ENCODE measurements at regions of chr6 and their contacts with region 1.

Region 1: GRCh38 chr6:26204332-26205165 is 117.3 kb downstream of the HFE start:
- DNase-seq: peak; percentile 98
- ATAC-seq: peak; percentile 72
- H3K4me3 ChIP-seq: peak overlapping the region; percentile 63 to 71
- H3K27ac ChIP-seq: peak overlapping the region; percentile 98
- H3K4me1 ChIP-seq: peaks cover 26 to 40% of the 10 kb centered on the region in 2 experiments
- H3K27me3 ChIP-seq: no peaks in the 10 kb centered on the region
- CTCF ChIP-seq: peak in 1 of 3 experiments; percentile 20; a peak in 2 of 6 replicates
- POLR2A ChIP-seq: peak; percentile 99
- RAD21 ChIP-seq: peak; percentile 2; the same call in 1 of the 2 replicates

Region 2: GRCh38 chr6:26075063-26075717 is 129.4 kb before region 1 on chr6:
- CTCF ChIA-PET with region 1: no interaction called
- POLR2A ChIA-PET with region 1: no interaction called
- RAD21 ChIA-PET with region 1: no interaction called
- intact Hi-C with region 1: no loop called
- DNase-seq: no peak
- ATAC-seq: no peak
- H3K4me3 ChIP-seq: no peak overlapping the region
- H3K27ac ChIP-seq: no peak overlapping the region
- H3K4me1 ChIP-seq: peaks cover 7 to 11% of the 10 kb centered on the region in 2 experiments; a peak in 3 of 4 replicates
- H3K27me3 ChIP-seq: no peaks in the 10 kb centered on the region
- CTCF ChIP-seq: no peak
- POLR2A ChIP-seq: no peak
- RAD21 ChIP-seq: no peak

Region 3: GRCh38 chr6:26285143-26286134 is 80.9 kb after region 1 on chr6:
- CTCF ChIA-PET with region 1: no interaction called
- POLR2A ChIA-PET with region 1: interaction called, 12 read pairs
- RAD21 ChIA-PET with region 1: no interaction called
- intact Hi-C with region 1: loop called (anchors 1 kb)
- DNase-seq: peak; percentile 92
- ATAC-seq: peak; percentile 84
- H3K4me3 ChIP-seq: peak overlapping the region; percentile 44 to 56
- H3K27ac ChIP-seq: peak overlapping the region; percentile 77
- H3K4me1 ChIP-seq: peaks cover 2 to 17% of the 10 kb centered on the region in 2 experiments; a peak in 3 of 4 replicates
- H3K27me3 ChIP-seq: no peaks in the 10 kb centered on the region
- CTCF ChIP-seq: no peak
- POLR2A ChIP-seq: peak; percentile 98
- RAD21 ChIP-seq: no peak